GM12878 (cell line): ENCODE measurements at regions of chr10 and their contacts with region 1.

Region 1: DNA sequence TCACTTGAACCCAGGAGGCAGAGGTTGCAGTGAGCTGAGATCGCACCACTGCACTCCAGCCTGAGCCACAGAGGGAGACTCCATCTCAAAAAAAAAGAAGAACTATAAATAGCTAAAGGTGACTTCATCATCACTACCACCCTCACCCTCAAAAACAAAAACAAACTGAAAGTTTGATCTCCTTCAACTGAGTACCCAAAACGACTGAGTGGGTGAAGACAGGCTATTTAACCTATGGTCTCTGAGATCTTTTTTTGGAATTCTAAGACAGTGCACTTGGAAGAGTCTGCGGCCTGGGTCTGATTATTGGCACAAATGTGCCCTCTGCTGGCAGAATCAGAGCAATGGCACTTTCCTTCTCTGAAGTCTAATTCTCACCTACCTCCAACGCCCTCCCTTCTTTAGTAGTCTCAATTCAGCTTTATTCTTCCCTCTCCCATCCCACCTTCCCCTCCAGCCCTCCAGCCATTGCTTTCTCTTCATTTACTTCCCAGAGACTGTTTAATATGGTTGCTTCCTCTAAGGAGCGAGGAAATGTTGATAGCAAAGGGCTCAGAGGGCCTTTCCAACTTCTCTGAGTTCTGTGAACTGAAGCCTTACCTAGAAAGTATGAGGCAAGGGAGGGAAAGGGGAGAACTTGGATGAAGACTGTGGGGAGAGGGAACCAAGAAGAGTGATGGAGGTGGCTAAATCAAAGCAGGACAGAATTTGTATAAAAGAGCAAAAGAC is 2.9 kb upstream of the MYOZ1 start:
- DNase-seq: peak; percentile 53
- ATAC-seq: peak; percentile 87
- H3K4me3 ChIP-seq: no peak overlapping the region
- H3K27ac ChIP-seq: peak overlapping the region; percentile 27; the same call in 1 of the 2 replicates
- H3K4me1 ChIP-seq: peaks cover 18% of the 10 kb centered on the region
- H3K27me3 ChIP-seq: no peaks in the 10 kb centered on the region
- CTCF ChIP-seq: peak; percentile 79 to 91 (median 81); a peak in 5 of 6 replicates
- EP300 ChIP-seq: no peak
- POLR2A ChIP-seq: no peak
- RAD21 ChIP-seq: peak; percentile 86

Region 2: DNA sequence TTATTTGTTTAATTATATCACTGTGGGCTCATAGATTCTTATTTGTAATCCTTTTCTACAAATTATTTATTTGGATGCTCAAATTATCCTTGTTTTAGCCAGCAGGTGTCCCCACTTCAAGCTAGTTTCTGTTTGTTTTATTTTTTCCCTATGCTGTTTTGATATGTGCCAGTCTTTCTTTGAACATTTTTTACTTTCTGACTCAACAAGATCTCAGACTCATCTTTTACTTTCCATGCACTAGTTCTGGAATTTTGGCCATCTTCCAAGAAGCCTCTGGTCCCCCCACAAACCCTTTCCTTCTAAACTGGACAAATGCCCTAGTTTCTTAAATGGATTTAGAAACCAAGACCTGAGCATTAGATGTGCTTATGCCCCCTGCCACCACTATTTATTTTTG is 380.2 kb before region 1 on chr10:
- CTCF ChIA-PET with region 1: interaction called, 26 read pairs
- POLR2A ChIA-PET with region 1: no interaction called
- RAD21 ChIA-PET with region 1: interaction called, 14 read pairs
- SMC1A ChIA-PET with region 1: interaction called, 29 read pairs
- in situ Hi-C with region 1: loop called (anchors 5 kb)
- intact Hi-C with region 1: loop called (anchors 1 kb)
- DNase-seq: no peak
- ATAC-seq: peak; percentile 52; the same call in 2 of the 3 replicates
- H3K4me3 ChIP-seq: no peak overlapping the region
- H3K27ac ChIP-seq: no peak overlapping the region
- H3K4me1 ChIP-seq: no peaks in the 10 kb centered on the region
- H3K27me3 ChIP-seq: no peaks in the 10 kb centered on the region
- CTCF ChIP-seq: peak; percentile 46 to 52 (median 49); a peak in 5 of 6 replicates
- EP300 ChIP-seq: no peak
- POLR2A ChIP-seq: no peak
- RAD21 ChIP-seq: peak; percentile 41

Region 3: DNA sequence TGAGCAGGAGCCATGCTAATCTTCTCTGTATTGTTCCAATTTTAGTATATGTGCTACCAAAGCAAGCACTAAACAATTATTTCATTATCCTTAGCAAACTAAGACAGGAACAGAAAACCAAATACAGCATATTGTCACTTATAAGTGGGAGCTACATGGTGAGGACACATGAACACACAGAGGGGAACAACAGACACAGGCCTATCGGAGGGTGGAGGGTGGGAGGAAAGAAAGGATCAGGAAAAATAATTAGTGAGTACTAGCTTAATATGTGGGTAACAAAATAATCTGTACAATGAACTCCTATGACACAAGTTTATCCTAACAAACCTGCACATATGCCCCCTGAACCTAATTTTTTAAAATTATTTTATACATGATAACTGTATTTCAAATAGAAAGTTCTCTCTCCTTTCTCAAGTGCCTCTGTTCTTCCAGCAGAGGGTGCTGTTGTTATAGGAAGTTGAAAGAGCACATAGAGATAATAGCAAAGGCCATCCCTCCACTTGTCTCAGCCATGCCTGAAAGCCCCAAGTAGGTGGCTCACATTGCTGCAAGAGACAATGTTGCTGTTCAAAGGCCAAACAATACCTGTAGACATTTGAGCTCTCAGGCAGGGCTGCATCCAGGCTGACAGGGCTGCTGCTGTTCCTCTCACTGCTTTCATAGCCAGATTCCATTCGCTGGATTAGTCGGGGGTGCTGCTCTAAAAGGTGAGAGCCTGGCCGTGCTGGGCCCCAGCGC is 114.9 kb before region 1 on chr10:
- CTCF ChIA-PET with region 1: interaction called, 163 read pairs
- POLR2A ChIA-PET with region 1: interaction called, 5 read pairs
- RAD21 ChIA-PET with region 1: interaction called, 96 read pairs
- SMC1A ChIA-PET with region 1: interaction called, 134 read pairs
- in situ Hi-C with region 1: loop called (anchors 5 kb)
- intact Hi-C with region 1: loop called (anchors 1 kb)
- DNase-seq: peak; percentile 20
- ATAC-seq: peak; percentile 100
- H3K4me3 ChIP-seq: no peak overlapping the region
- H3K27ac ChIP-seq: no peak overlapping the region
- H3K4me1 ChIP-seq: no peaks in the 10 kb centered on the region
- H3K27me3 ChIP-seq: no peaks in the 10 kb centered on the region
- CTCF ChIP-seq: peak; percentile 72 to 83 (median 79)
- EP300 ChIP-seq: no peak
- POLR2A ChIP-seq: no peak
- RAD21 ChIP-seq: peak; percentile 97

Region 4: DNA sequence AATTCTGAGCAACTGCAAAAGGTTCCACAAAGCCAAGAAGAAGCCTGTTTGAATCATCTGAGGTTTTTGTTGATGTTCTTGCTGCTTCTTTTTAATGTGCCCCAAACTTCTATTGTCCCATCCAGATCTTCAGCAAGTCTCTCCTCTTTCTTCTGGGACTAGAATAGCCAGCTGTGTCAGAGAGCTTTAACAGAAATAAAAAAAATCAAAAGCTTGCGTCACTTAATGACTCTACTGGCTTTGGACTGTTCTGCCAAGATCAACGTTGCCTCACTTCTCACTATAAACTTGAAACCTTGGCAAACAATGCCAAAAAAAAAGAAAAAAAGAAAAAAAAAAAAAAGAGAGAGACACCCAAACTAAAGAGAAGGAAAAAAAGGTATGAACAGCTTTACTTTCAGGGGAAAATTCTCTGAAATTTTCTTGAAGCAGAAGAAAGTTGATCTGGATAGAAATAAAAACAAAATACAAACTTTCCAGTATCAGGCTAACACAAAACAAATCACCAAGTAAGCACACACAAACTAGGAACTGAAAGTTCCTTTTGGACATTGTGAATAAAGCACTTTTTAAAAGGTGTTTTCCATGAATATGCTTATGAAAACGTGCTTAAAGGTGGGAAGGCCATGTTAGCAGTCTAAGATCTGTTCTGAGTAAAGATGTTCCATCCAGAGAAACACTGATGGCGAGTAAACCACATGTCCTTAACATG is 67.8 kb before region 1 on chr10:
- CTCF ChIA-PET with region 1: interaction called, 11 read pairs
- POLR2A ChIA-PET with region 1: interaction called, 4 read pairs
- RAD21 ChIA-PET with region 1: interaction called, 8 read pairs
- SMC1A ChIA-PET with region 1: interaction called, 9 read pairs
- in situ Hi-C with region 1: no loop called
- intact Hi-C with region 1: no loop called
- DNase-seq: peak; percentile 17
- ATAC-seq: peak; percentile 68
- H3K4me3 ChIP-seq: no peak overlapping the region
- H3K27ac ChIP-seq: peak overlapping the region; percentile 48; the same call in 1 of the 2 replicates
- H3K4me1 ChIP-seq: no peaks in the 10 kb centered on the region; the same call in 1 of the 2 replicates
- H3K27me3 ChIP-seq: no peaks in the 10 kb centered on the region
- CTCF ChIP-seq: no peak
- EP300 ChIP-seq: peak in 1 of 2 experiments; percentile 49; a peak in 1 of 4 replicates
- POLR2A ChIP-seq: no peak
- RAD21 ChIP-seq: no peak

Region 5: DNA sequence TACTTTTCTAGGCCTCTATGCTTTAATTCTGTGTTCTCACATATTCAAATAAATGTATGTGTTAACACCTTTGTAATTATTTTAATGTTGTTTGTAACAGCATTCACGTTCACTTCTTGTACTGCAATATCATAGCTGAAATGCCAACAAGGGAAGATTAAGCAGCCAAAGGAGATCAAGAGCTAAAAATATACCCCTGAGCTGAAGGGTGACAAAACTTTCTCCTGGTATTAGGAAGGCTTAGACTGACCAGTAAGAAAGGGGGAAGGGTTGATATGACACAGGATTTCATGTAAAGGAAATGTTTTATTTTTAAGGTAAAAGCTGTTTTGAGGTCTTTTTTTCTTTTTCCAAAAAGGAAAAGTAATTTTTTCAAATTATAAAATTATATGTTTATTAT is 1526.0 kb after region 1 on chr10:
- CTCF ChIA-PET with region 1: no interaction called
- POLR2A ChIA-PET with region 1: no interaction called
- RAD21 ChIA-PET with region 1: no interaction called
- SMC1A ChIA-PET with region 1: no interaction called
- in situ Hi-C with region 1: no loop called
- intact Hi-C with region 1: no loop called
- DNase-seq: no peak
- ATAC-seq: no peak
- H3K4me3 ChIP-seq: no peak overlapping the region
- H3K27ac ChIP-seq: no peak overlapping the region
- H3K4me1 ChIP-seq: peaks cover 11% of the 10 kb centered on the region
- H3K27me3 ChIP-seq: no peaks in the 10 kb centered on the region
- CTCF ChIP-seq: no peak
- EP300 ChIP-seq: no peak
- POLR2A ChIP-seq: no peak
- RAD21 ChIP-seq: no peak